ENCODE measurements at regions of chr6 and their contacts with region 1.

Region 1: GRCh38 chr6:16344756-16345155 is 106.4 kb downstream of the GMPR start:
- DNase-seq: no peak
- H3K4me3 ChIP-seq: no peak overlapping the region
- H3K27ac ChIP-seq: peak overlapping the region; percentile 6 to 56 (median 31)
- H3K4me1 ChIP-seq: peaks cover 0 to 19% (median 6%) of the 10 kb centered on the region in 4 donors
- H3K27me3 ChIP-seq: no peaks in the 10 kb centered on the region
- CTCF ChIP-seq: no peak
- EP300 ChIP-seq: no peak
- POLR2A ChIP-seq: no peak

Region 2: DNA sequence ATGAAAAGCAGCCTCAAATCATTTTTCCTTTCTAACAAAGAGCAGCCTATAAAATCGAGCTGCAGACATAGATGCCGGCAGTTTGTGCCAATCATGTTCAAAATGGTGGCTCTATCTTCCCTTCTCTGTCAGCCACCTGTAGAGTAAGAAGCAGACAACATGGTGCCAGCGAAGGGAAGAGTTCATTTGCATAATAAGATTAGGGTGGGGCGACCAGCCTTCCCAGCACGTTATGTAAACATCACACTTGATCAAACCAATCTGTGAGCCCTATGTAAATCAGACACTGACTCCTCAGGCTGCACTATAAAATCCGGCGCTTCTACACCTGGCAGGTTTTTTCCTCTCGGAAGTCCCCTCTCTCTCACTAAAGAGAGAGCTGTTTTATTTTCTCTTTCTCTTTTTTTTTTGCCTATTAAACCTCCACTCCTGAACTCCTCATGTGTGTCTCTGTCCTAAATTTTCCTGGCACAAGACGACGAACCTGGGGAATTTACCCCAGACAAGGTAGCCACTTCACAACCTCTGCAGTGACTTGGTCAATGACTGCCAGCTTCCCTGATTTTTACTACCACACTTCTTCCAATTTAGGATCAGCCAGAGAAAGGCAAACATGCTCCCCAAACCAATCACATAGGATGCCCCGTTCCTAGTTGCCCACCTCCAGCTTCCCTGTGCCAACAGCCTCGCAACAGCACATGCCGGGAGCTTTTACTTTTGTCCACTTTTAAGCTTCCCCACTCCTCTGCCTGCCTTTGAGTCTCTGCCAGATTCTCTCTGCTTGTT is 1797.2 kb after region 1 on chr6:
- in situ Hi-C with region 1: no loop called
- intact Hi-C with region 1: loop called (anchors 5 kb)
- DNase-seq: no peak
- H3K4me3 ChIP-seq: no peak overlapping the region
- H3K27ac ChIP-seq: no peak overlapping the region
- H3K4me1 ChIP-seq: peaks cover 0 to 27% (median 2%) of the 10 kb centered on the region in 4 donors
- H3K27me3 ChIP-seq: no peaks in the 10 kb centered on the region
- CTCF ChIP-seq: no peak
- EP300 ChIP-seq: no peak
- POLR2A ChIP-seq: no peak